K562 (cell line): ENCODE measurements at regions of chr10 and their contacts with region 1.

Region 1: DNA sequence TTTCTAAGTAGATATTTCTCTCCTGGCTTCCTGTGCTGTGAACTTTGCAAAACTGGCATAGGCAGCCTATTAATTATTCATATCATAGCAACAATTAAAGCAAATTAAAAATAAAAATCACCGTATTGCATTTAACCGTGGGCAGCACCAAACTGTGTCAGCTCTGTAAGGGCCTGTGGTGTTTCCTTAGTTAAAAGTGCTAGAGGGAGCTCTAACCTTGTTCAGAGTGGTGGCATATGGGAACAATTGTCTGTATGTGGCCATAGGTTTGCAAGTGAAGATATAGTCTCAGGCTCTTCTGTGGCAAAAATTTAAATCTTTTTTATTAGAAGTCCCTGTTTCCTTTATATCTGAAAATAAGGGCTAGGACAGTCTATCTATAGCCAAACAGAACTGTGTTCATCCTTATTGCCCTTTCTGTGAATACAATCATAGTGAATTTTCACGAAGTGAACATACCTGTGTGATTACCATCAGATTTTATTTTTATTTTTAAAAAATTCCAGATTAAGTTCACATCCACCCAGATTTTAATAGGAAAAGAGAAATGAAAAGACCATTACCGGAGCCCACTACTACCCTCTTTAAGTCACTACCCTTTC is 92.6 kb downstream of the POLL start:
- DNase-seq: peak in 3 of 4 experiments; percentile 8 to 47 (median 28)
- ATAC-seq: peak; percentile 92
- H3K4me3 ChIP-seq: no peak overlapping the region
- H3K27ac ChIP-seq: no peak overlapping the region
- H3K4me1 ChIP-seq: no peaks in the 10 kb centered on the region
- H3K27me3 ChIP-seq: no peaks in the 10 kb centered on the region
- CTCF ChIP-seq: peak; percentile 46 to 62 (median 56)
- EP300 ChIP-seq: no peak
- POLR2A ChIP-seq: no peak
- RAD21 ChIP-seq: peak; percentile 50 to 67

Region 2: DNA sequence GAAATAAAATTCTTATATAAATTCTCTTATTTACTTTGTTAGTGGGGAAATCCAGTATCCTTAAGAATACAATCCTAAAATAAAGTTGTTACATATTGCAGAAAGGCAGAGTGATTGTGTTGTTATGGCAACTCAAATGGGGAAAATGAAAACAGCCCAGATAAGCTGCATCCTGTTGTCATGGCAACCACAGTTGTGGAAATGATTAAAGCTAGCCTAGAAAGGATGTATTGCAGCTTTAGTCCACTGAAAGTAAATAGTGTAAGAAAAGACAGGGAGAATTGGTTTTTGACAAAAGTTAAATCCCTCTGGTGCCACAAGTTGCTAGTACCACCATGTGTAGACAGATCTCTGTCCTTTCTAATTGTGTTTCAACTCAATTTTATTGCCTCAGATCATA is 98.3 kb before region 1 on chr10:
- CTCF ChIA-PET with region 1: no interaction called
- POLR2A ChIA-PET with region 1: no interaction called
- in situ Hi-C with region 1: no loop called
- intact Hi-C with region 1: no loop called
- DNase-seq: peak; percentile 14 to 21 (median 17)
- ATAC-seq: no peak
- H3K4me3 ChIP-seq: no peak overlapping the region
- H3K27ac ChIP-seq: no peak overlapping the region
- H3K4me1 ChIP-seq: peaks cover 0 to 10% of the 10 kb centered on the region in 2 experiments; a peak in 2 of 5 replicates
- H3K27me3 ChIP-seq: no peaks in the 10 kb centered on the region
- CTCF ChIP-seq: no peak
- EP300 ChIP-seq: no peak
- POLR2A ChIP-seq: no peak
- RAD21 ChIP-seq: no peak

Region 3: GRCh38 chr10:101536800-101537199 is 41.4 kb after region 1 on chr10:
- CTCF ChIA-PET with region 1: no interaction called
- POLR2A ChIA-PET with region 1: no interaction called
- in situ Hi-C with region 1: no loop called
- intact Hi-C with region 1: loop called (anchors 2 kb)
- DNase-seq: peak; percentile 22 to 53 (median 36)
- ATAC-seq: peak; percentile 82
- H3K4me3 ChIP-seq: no peak overlapping the region
- H3K27ac ChIP-seq: peak overlapping the region; percentile 77
- H3K4me1 ChIP-seq: peaks cover 0 to 16% of the 10 kb centered on the region in 2 experiments; a peak in 3 of 5 replicates
- H3K27me3 ChIP-seq: no peaks in the 10 kb centered on the region
- CTCF ChIP-seq: peak; percentile 29 to 55 (median 33); a peak in 3 of 6 replicates
- EP300 ChIP-seq: no peak
- POLR2A ChIP-seq: no peak
- RAD21 ChIP-seq: peak in 1 of 2 experiments; percentile 34; a peak in 2 of 4 replicates

Region 4: GRCh38 chr10:101569838-101570766 is 74.7 kb after region 1 on chr10:
- CTCF ChIA-PET with region 1: interaction called, 3 read pairs
- POLR2A ChIA-PET with region 1: interaction called, 4 read pairs
- in situ Hi-C with region 1: no loop called
- intact Hi-C with region 1: loop called (anchors 1 kb)
- DNase-seq: peak; percentile 77 to 88 (median 86)
- ATAC-seq: peak; percentile 88
- H3K4me3 ChIP-seq: peak overlapping the region; percentile 54
- H3K27ac ChIP-seq: no peak overlapping the region; the same call in 2 of the 3 replicates
- H3K4me1 ChIP-seq: peaks cover 20 to 48% of the 10 kb centered on the region in 2 experiments
- H3K27me3 ChIP-seq: no peaks in the 10 kb centered on the region
- CTCF ChIP-seq: peak; percentile 34 to 78 (median 60); a peak in 5 of 6 replicates
- EP300 ChIP-seq: no peak
- POLR2A ChIP-seq: no peak
- RAD21 ChIP-seq: peak; percentile 64 to 69